Gastrocnemius medialis (tissue), 4 donors: ENCODE measurements at regions of chr11 and their contacts with region 1.

Region 1: GRCh38 chr11:7513234-7514098 is at the start of gene PPFIBP2:
- DNase-seq: peak; percentile 77 to 88
- ATAC-seq: peak; percentile 67 to 74
- H3K4me3 ChIP-seq: peak within 1 kb of the TSS; percentile 55 to 89 (median 84)
- H3K27ac ChIP-seq: peak within 1 kb of the TSS; percentile 84 to 95 (median 94)
- H3K4me1 ChIP-seq: peaks cover 31 to 36% of the 10 kb centered on the region in 2 donors
- H3K27me3 ChIP-seq: no peaks in the 10 kb centered on the region
- CTCF ChIP-seq: peak; percentile 72 to 82 (median 75)
- POLR2A ChIP-seq: peak; percentile 88 to 92
- total RNA-seq, gene PPFIBP2: 10.5 to 33.5 (median 25.4) TPM

Region 2: DNA sequence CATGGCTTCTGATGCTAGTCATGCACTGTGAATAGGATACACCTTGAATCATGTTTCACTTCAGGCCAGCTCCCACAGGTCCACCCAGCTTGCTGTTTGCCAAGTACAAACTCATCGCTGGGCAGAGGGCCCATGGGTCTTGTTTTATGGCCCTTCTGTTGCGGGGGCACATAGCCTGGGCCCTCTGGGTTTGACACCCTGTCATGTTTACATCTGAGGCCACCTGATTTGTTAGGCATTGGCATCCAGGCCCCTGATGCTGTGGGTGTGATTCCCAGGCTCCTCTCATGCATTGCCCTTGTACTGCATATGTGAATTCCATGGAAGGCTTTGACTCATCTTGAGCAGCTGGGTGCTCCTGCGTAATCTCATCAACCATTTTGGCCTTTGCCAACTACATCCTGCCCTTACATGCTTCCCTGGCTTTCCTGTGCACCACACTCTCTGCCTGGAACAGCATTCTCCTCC is 32.9 kb after region 1 on chr11:
- in situ Hi-C with region 1: no loop called
- intact Hi-C with region 1: loop called (anchors 1 kb)
- DNase-seq: peak; percentile 62 to 88
- ATAC-seq: peak; percentile 91 to 92
- H3K4me3 ChIP-seq: no peak overlapping the region
- H3K27ac ChIP-seq: peak overlapping the region; percentile 77 to 93 (median 86)
- H3K4me1 ChIP-seq: peaks cover 43 to 53% of the 10 kb centered on the region in 2 donors
- H3K27me3 ChIP-seq: no peaks in the 10 kb centered on the region
- CTCF ChIP-seq: no peak
- POLR2A ChIP-seq: peak in 1 of 2 donors; percentile 8

Region 3: GRCh38 chr11:7577291-7578190 is 64.1 kb after region 1 on chr11:
- in situ Hi-C with region 1: no loop called
- intact Hi-C with region 1: loop called (anchors 1 kb)
- DNase-seq: peak; percentile 87 to 88
- ATAC-seq: peak; percentile 72 to 75
- H3K4me3 ChIP-seq: peak overlapping the region; percentile 44 to 56 (median 50)
- H3K27ac ChIP-seq: peak overlapping the region; percentile 89 to 96 (median 94)
- H3K4me1 ChIP-seq: peaks cover 83 to 91% of the 10 kb centered on the region in 2 donors
- H3K27me3 ChIP-seq: no peaks in the 10 kb centered on the region
- CTCF ChIP-seq: peak in 1 of 5 experiments; percentile 15
- POLR2A ChIP-seq: peak; percentile 45 to 60

Region 4: DNA sequence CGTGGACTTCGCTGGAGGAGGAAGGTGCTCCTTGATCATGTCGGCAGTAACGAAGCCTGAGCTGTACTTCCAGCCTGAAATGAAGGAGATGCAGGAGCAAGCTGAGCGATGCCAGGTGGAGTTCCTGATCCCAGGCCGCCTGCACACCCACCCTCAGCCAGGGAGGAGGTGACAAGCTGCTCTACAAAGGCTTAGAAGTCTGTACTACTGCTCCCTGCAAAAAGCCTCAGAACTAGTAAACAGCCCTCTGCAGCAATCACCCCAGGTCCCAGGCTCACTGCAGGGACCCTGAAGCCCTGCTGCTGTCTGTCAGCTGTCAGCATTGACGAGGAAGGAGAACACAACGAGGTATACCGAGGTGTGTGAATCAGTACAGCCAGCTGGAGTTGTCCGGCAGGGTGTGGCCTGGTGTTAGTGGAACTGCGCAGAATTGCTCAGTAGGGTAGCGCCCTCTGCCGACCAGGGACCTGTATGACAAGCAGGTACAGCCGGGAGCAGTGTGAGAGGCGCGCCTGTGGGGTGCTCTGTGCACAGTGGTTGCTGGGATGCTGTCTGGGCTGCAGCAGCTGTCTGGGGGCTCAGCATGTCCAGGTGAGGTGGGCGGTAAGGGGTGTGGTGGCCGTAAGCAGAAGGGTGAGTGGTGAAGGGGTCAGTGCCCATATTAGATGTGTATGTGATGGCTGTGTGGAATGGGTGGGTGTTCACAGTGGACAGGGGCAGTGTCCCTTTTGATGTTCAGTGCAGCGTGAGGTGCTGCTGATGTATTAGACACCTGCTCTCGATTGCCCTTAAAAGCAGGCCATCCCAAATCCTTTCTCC is 152.2 kb after region 1 on chr11:
- in situ Hi-C with region 1: no loop called
- intact Hi-C with region 1: loop called (anchors 2 kb)
- DNase-seq: peak; percentile 35 to 77
- ATAC-seq: peak; percentile 88 to 95
- H3K4me3 ChIP-seq: no peak overlapping the region
- H3K27ac ChIP-seq: no peak overlapping the region
- H3K4me1 ChIP-seq: no peaks in the 10 kb centered on the region
- H3K27me3 ChIP-seq: no peaks in the 10 kb centered on the region
- CTCF ChIP-seq: peak; percentile 73 to 92 (median 89)
- POLR2A ChIP-seq: no peak

Region 5: GRCh38 chr11:7986768-7987559 is 473.5 kb after region 1 on chr11 and contains the start of gene EIF3F:
- in situ Hi-C with region 1: no loop called
- intact Hi-C with region 1: loop called (anchors 2 kb)
- DNase-seq: peak; percentile 93
- ATAC-seq: peak; percentile 100
- H3K4me3 ChIP-seq: peak within 1 kb of the TSS; percentile 79 to 85 (median 84)
- H3K27ac ChIP-seq: peak within 1 kb of the TSS; percentile 77 to 86 (median 78)
- H3K4me1 ChIP-seq: peaks cover 28% of the 10 kb centered on the region in 2 donors
- H3K27me3 ChIP-seq: no peaks in the 10 kb centered on the region
- CTCF ChIP-seq: peak; percentile 83 to 90 (median 86)
- POLR2A ChIP-seq: peak; percentile 18 to 40
- total RNA-seq, gene EIF3F: 187 to 303 (median 239) TPM